Left cardiac atrium (tissue), 4 donors: ENCODE measurements at regions of chr2 and their contacts with region 1.

Region 1: DNA sequence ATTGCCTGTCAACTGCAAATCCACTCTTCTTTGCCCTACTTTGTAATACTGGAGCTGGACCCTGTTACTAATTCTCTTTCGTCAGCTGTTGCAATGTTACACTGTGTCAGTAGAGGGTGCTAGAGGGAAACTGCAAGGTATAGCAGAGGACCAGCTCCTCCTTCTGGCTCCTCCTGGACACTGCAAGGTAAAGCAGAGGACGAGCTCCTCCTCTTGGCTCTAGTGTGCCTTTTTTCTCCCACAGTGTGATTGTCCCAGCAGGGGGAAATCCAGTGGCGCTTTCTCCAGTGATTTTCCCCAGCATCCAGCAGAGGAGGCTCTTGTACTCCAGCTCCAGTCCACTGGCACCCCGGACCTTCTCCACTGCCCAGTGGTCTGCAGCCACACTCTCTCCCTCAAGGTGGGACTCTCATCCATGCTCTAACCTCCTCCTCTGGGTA is 95.6 kb downstream of the CAPN13 start:
- DNase-seq: peak; percentile 80
- ATAC-seq: peak; percentile 71 to 77

Region 2: GRCh38 chr2:30165050-30165520 is 546.6 kb before region 1 on chr2:
- intact Hi-C with region 1: loop called (anchors 5 to 10 kb)
- DNase-seq: peak; percentile 40
- ATAC-seq: peak; percentile 88 to 96

Region 3: GRCh38 chr2:30208452-30208851 is 503.2 kb before region 1 on chr2:
- intact Hi-C with region 1: loop called (anchors 1 to 5 kb)
- DNase-seq: peak; percentile 67
- ATAC-seq: peak; percentile 90 to 95

Region 4: DNA sequence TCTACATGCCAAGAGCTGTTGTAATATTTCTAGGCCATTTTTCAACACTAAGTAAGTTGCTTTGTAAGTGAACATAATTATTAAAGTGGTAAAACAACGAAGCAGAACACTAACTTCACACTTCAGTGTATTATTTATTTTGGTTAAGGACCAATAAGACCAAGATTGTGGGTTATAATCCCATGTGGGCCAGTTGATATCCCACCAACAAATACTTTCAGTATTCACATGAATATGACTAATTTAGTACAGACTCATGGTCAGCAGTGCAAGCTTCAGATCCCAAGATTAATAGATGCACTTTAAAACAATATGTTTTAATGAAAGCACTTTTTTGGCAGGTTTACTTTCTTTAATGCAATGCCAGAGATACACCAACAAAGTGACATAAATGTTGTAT is 110.3 kb before region 1 on chr2:
- intact Hi-C with region 1: no loop called
- DNase-seq: no peak
- ATAC-seq: peak in 1 of 2 donors; percentile 76

Region 5: GRCh38 chr2:31170071-31170698 is 458.5 kb after region 1 on chr2:
- intact Hi-C with region 1: loop called in 1 of 2 experiments (anchors 2 kb)
- DNase-seq: peak; percentile 52
- ATAC-seq: peak; percentile 82 to 83

Region 6: DNA sequence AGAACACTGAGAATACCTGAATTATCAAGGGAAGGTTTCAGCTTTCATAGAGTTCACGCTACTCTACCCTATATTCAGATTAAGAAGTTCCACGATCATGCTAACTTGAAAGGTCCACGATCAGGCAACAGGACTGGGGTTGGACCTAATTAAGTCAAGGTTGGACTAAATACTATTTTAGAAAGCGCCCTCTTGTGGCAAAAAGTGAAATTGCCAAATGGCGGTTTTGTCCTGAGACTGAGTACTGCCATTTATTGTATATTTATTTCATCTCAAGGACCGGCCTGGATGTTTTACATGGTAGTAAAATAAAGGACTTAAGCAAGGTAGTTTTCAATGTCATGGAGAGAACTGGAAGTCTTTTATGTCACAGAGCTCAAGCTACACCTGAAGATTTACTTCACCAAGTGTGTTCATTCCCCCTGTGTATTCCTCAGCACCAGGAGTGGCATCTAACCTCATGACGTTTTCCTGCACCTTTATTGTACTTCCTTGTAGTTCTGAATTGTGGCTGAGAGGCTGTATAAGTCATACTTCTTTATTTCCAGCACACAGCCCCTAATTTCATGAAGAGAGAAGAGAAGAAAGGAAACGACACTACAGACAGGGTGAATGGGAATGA is 812.3 kb after region 1 on chr2:
- intact Hi-C with region 1: loop called (anchors 10 kb)
- DNase-seq: no peak
- ATAC-seq: no peak